Activated B cell treated with CpG ODN at 0.5 μM for 24 hours (primary cell): ENCODE measurements at regions of chr9 and their contacts with region 1.

Region 1: GRCh38 chr9:129080602-129081387 is at the start of gene DOLPP1:
- DNase-seq: peak; percentile 97
- ATAC-seq: peak; percentile 95
- H3K4me3 Mint-ChIP-seq: peak within 1 kb of the TSS; percentile 87
- H3K27ac Mint-ChIP-seq: peak within 1 kb of the TSS; percentile 76
- H3K4me1 Mint-ChIP-seq: peaks cover 29% of the 10 kb centered on the region
- H3K27me3 Mint-ChIP-seq: no peaks in the 10 kb centered on the region
- CTCF ChIP-seq: no peak
- total RNA-seq, gene DOLPP1: 10.9 and 11.3 TPM in 2 replicates

Region 2: GRCh38 chr9:129110740-129111527 is 30.1 kb after region 1 on chr9 and contains the starts of genes CRAT and PTPA:
- CTCF ChIA-PET with region 1: no interaction called
- POLR2A ChIA-PET with region 1: interaction called, 27 read pairs
- intact Hi-C with region 1: loop called (anchors 1 kb)
- DNase-seq: peak; percentile 91
- ATAC-seq: peak; percentile 88
- H3K4me3 Mint-ChIP-seq: peak within 1 kb of the TSS; percentile 95
- H3K27ac Mint-ChIP-seq: peak within 1 kb of the TSS; percentile 95
- H3K4me1 Mint-ChIP-seq: peaks cover 39% of the 10 kb centered on the region
- H3K27me3 Mint-ChIP-seq: no peaks in the 10 kb centered on the region
- CTCF ChIP-seq: no peak
- total RNA-seq, gene CRAT: 6.8 and 8.2 TPM in 2 replicates
- total RNA-seq, gene PTPA: 65.5 and 67.2 TPM in 2 replicates